ENCODE measurements at regions of chr2 and their contacts with region 1.

Region 1: DNA sequence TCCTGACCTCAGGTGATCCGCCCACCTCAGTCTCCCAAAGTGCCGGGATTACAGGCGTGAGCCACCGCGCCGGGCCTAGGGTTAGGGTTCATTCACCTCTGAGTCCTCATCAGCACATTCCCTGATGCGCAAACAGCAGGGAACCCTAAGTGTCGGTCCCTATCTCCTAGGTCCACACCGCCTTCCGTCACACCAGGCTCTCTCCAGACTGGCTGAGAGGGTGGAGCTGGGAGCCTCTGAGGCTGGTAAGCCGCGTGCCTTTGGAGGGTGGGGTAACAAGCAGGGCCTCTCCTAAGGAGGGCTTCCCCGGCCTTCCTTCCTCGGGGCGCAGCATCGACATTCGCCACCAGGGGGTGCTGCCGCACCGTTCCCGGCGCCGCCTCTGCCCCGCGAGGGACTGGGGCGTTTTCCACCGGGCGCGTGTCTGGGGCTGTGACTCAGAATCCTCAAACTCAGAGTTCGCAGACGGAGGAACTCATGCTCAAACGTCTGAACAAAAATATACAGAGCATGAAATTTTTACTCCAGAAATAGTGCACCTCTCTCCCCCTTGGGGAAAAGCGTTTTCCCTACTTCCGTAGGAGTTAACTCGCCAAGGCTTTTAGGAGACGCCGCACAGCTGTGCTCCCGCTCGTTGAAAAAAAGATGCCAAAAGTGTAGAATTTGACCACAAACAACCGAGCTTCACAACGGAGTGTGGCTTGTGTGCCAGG is 63.9 kb upstream of the ASAP2 start:
- DNase-seq: peak; percentile 85
- H3K4me3 Mint-ChIP-seq: no peak overlapping the region
- H3K27ac Mint-ChIP-seq: no peak overlapping the region
- H3K4me1 Mint-ChIP-seq: no peaks in the 10 kb centered on the region
- H3K27me3 Mint-ChIP-seq: peaks cover 18% of the 10 kb centered on the region

Region 2: DNA sequence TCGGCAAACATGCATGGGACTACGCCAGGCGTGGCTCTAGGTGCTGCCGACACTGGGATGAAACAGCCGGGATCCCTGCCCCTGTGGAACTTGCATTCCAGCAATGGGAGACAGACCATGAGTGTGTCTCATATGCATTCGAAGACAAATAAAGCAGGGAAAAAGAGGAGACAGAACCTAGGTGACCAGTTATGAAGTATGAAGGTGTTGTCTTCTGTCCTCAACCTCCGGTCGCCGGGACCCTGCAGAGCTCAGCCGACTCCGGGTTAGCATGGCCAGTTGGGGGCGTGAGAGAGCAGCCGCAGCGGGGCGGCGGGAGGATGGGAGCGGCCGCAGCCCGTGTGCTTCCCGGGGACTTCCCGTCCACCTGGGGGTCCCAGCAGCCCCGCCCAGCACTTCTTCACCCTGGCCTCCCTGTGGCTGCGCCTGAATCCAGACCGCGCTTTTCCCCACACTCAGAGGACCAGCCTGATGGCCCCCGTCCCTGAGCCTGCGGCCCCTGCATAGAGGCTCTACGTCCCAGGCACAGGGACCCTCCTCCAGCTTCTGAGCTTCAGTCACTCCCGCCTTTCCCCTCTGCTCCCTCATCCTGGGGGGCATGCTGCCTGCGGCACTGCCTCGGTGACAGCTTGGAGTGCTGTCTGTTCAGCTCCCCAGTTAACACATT is 449.4 kb before region 1 on chr2:
- CTCF ChIA-PET with region 1: interaction called, 5 read pairs
- intact Hi-C with region 1: loop called (anchors 10 kb)
- DNase-seq: peak; percentile 70
- H3K4me3 Mint-ChIP-seq: peak overlapping the region; percentile 18
- H3K27ac Mint-ChIP-seq: no peak overlapping the region
- H3K4me1 Mint-ChIP-seq: peaks cover 3% of the 10 kb centered on the region
- H3K27me3 Mint-ChIP-seq: peaks cover 22% of the 10 kb centered on the region

Region 3: DNA sequence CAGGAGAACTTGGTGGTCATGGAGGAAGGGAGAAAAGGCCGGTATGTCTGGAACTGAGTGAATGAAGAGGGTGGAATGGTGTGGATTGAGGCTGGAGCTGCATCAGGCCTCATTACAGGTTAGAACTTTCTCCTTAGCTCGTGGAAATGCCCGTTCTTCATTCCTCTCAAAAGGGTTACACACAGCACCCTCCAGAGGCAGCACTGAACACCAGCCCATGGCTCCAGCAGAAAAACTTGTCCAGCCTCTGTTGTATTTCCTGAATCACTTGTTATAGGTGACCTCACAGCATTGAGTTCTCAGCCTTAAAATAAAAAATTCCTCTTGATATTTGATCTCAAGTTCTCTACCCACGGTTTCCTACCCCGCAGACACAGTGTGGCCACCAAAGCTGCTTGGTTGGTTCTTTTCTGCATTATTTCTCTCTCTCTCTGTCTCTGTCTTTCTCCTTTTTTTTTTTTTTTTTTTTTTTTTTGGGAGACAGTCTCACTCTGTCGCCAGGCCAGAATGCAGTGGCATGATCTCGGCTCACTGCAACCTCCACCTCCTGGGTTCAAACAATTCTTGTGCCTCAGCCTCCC is 191.0 kb after region 1 on chr2:
- CTCF ChIA-PET with region 1: interaction called, 7 read pairs
- intact Hi-C with region 1: loop called (anchors 1 kb)
- DNase-seq: peak; percentile 45
- H3K4me3 Mint-ChIP-seq: no peak overlapping the region
- H3K27ac Mint-ChIP-seq: no peak overlapping the region
- H3K4me1 Mint-ChIP-seq: peaks cover 5% of the 10 kb centered on the region
- H3K27me3 Mint-ChIP-seq: no peaks in the 10 kb centered on the region

Region 4: DNA sequence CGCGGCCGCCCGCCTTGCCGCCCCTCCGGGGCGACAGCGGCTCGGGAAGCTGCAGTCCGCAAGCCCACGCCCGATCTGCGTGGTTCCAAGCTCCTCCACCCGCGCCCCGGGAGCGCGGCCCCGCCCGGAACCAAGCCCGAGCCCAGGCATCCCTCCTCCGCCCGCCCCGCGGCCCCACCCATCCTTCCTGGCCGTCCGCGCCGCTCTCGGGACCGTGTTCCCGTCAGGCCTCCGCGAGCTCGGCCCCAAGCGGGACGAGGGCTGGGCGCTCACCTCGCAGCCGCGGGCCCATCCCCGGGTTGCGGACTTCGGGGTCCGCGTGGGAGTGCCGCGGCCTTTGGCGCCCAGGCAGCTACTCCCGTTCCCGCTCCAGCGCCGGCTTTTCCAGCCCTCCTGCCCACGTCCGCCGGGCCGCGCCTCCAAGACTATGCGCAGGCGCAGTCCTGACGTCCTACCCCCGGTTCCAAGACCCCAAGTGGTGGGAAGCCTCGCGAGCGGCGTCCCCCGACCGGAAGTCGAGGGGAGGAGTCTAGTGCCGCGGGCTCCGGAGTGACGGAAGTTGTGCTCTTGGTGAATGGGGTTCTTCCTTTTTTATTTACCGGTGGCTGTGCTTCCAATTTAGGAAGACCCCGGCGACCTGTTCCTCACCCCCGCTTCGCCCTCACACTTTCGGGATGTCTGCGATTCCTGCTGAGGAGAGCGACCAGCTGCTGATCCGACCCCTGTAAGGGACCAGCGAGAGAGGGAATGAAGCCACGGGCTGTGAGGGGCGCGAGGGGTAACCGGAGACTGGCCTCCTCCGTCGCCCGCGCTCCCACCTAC is 280.6 kb after region 1 on chr2 and contains the starts of genes CPSF3 and ITGB1BP1:
- CTCF ChIA-PET with region 1: no interaction called
- intact Hi-C with region 1: loop called (anchors 5 kb)
- DNase-seq: peak; percentile 97
- H3K4me3 Mint-ChIP-seq: no peak within 1 kb of the TSS
- H3K27ac Mint-ChIP-seq: peak within 1 kb of the TSS; percentile 92
- H3K4me1 Mint-ChIP-seq: peaks cover 39% of the 10 kb centered on the region
- H3K27me3 Mint-ChIP-seq: no peaks in the 10 kb centered on the region
- total RNA-seq, gene CPSF3: 64.5 to 65.7 TPM
- total RNA-seq, gene ITGB1BP1: 97.2 to 97.4 TPM

Region 5: DNA sequence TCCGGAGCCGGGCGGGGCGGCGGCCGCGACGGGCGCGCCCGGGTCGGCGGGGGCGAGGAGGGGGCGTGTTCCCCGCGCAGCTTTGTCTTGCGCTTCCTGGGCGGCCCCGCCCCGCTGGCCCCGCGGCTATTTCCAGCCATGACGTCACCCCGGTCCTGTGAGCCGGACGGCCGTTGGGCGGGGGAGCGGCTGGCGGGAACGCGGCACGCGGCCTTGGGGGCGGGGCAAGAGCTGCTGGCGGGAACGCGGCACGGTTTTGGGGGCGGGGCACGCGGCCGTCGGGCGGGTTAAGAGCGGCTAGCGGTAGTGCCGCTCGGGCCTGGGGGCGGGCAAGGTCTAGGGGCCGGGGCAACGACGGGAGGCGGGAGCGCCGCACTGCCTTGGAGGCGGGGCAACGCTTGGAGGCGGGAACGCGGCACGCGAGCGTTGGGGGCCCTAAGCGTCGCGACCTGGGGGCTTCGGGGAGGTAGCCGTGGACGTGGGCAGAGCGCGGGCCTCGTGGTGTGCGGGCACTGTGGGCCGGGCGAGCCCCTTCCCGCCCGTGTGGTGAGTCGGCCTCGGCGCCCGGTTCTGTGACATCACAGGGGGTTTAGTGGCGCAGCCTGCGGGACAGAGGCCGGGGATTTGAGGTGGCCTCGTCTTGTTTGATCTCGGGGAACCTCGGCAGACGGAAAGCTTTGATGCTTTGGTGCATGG is 901.3 kb after region 1 on chr2:
- CTCF ChIA-PET with region 1: interaction called, 3 read pairs
- intact Hi-C with region 1: loop called (anchors 2 kb)
- DNase-seq: peak; percentile 87
- H3K4me3 Mint-ChIP-seq: peak overlapping the region; percentile 59
- H3K27ac Mint-ChIP-seq: peak overlapping the region; percentile 33
- H3K4me1 Mint-ChIP-seq: peaks cover 15% of the 10 kb centered on the region
- H3K27me3 Mint-ChIP-seq: peaks cover 3% of the 10 kb centered on the region

Measured in activated naive CD4-positive, alpha-beta T cell treated with anti-CD3 and anti-CD28 coated beads for 36 hours (primary cell).